Endothelial cell of umbilical vein (primary cell): ENCODE measurements at regions of chr14 and their contacts with region 1.

Region 1: DNA sequence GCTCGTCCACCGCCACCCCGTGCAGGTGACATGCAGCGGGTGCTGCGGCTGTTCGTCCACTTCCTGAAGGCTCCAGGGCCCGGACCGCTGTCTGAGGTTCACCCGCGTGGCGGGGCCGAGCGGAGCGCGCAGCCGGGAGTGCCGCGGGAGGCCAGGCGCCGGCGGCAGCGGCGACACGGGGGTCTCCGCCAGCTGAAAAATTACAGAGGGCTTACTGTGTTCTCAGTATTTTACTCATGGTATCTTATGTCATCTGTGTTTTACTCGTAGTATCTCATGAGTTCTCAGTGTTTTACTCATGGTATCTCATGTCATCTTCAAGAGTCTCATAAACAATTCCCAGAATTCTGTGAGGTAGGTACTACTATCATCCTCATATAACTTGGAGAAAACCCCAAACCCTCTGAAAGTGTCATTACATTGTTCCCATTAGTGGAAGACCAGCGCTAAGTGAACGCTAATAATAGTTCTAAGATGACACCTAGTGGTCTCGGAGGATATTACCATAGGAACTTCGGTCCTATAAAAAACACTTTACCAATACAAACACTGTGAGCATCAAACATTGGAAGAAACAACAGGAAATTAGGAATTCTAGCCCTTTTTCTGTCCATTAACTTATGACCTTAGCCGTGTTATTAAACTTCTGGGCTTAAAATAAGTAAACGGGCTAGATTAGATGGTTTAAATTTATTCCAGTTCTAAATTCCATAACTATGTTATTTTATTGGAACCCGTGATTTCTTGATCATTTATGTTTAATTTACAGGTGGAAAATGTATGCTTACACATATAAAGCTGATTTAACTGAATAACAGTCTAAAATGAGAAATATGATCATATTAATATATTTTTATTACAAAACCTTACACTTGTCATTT is 32.4 kb downstream of the AK7 start:
- DNase-seq: peak; percentile 82
- H3K4me3 ChIP-seq: peak overlapping the region; percentile 9 to 43 (median 25)
- H3K27ac ChIP-seq: no peak overlapping the region
- H3K4me1 ChIP-seq: peaks cover 7% of the 10 kb centered on the region
- H3K27me3 ChIP-seq: no peaks in the 10 kb centered on the region
- CTCF ChIP-seq: peak; percentile 41 to 48
- POLR2A ChIP-seq: no peak

Region 2: GRCh38 chr14:96100161-96101029 is 324.0 kb before region 1 on chr14:
- CTCF ChIA-PET with region 1: interaction called, 5 read pairs
- POLR2A ChIA-PET with region 1: no interaction called
- dilution Hi-C with region 1: no loop called
- intact Hi-C with region 1: loop called (anchors 1 kb)
- DNase-seq: peak; percentile 64
- H3K4me3 ChIP-seq: no peak overlapping the region
- H3K27ac ChIP-seq: no peak overlapping the region
- H3K4me1 ChIP-seq: no peaks in the 10 kb centered on the region
- H3K27me3 ChIP-seq: no peaks in the 10 kb centered on the region
- CTCF ChIP-seq: peak; percentile 81 to 83
- POLR2A ChIP-seq: no peak

Region 3: DNA sequence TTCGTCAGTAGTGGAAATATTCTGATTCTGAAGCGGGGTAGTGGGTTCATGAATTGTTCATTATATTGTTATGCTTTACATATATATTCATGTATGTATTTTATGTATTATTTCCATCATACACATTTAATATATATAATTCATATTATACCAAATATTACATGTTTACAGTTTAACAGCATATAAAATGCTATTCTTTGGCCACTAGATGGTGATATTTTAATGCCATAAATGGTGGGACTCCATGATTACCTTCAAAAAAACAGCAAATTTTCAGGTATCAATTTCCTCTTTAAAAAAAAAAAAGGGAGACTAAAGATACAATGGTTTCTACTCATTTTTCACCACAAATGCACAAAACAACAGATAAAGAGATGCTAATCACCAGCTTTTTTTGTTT is 127.3 kb before region 1 on chr14:
- CTCF ChIA-PET with region 1: interaction called, 36 read pairs
- POLR2A ChIA-PET with region 1: no interaction called
- dilution Hi-C with region 1: no loop called
- intact Hi-C with region 1: loop called (anchors 1 kb)
- DNase-seq: peak; percentile 22
- H3K4me3 ChIP-seq: no peak overlapping the region
- H3K27ac ChIP-seq: no peak overlapping the region
- H3K4me1 ChIP-seq: peaks cover 8% of the 10 kb centered on the region
- H3K27me3 ChIP-seq: no peaks in the 10 kb centered on the region
- CTCF ChIP-seq: peak; percentile 15 to 25
- POLR2A ChIP-seq: no peak

Region 4: GRCh38 chr14:96362965-96363756 is 61.2 kb before region 1 on chr14 and contains the starts of genes ATG2B and GSKIP:
- CTCF ChIA-PET with region 1: no interaction called
- POLR2A ChIA-PET with region 1: no interaction called
- dilution Hi-C with region 1: no loop called
- intact Hi-C with region 1: loop called (anchors 1 kb)
- DNase-seq: peak; percentile 90
- H3K4me3 ChIP-seq: peak within 1 kb of the TSS; percentile 80 to 97 (median 95)
- H3K27ac ChIP-seq: peak within 1 kb of the TSS; percentile 82
- H3K4me1 ChIP-seq: peaks cover 23% of the 10 kb centered on the region
- H3K27me3 ChIP-seq: no peaks in the 10 kb centered on the region
- CTCF ChIP-seq: no peak
- POLR2A ChIP-seq: peak; percentile 51
- total RNA-seq, gene ATG2B: 17.8 and 18.3 TPM in 2 replicates
- total RNA-seq, gene GSKIP: 15.9 and 20.2 TPM in 2 replicates

Region 5: DNA sequence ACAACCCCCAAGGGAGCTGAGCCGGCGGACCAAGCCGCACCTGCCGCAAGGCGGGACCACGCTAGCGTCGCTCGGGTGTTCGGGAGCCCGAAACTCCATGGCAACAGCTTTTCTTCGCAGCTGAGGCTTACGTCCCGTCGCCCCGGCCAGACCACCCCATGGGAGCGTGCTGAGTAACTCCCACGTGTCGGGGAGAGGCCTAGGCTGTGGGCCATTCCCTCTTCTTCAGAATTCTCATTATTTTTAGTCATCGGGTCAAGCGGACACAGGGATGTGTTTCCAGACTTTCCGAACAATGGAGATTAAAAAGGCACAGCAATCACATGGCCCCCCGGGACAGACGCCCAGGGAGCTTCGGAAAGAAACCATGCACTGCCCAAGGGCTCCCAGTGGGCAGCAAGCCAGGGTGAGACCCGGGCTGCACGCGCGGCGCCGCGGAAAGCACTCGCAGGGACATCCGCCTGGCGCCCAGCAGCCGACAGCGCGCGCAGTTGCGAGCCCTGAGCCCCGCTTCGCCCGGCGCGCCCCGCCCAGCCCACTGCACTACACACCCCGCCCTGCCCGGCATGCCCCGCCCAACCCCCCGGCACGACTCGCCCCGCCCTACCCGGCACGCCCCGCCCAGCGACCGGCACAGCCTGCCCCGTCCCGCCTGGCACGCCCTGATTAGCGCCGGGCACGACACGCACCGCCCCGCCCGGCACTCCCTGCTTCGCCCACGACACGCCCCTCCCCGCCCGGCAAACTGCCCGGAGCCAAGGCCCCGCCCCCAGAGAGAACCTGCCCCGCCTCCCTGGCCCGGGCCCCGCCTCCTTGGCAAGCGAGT is 32.8 kb before region 1 on chr14:
- CTCF ChIA-PET with region 1: interaction called, 3 read pairs
- POLR2A ChIA-PET with region 1: no interaction called
- dilution Hi-C with region 1: no loop called
- intact Hi-C with region 1: loop called (anchors 1 kb)
- DNase-seq: peak; percentile 96
- H3K4me3 ChIP-seq: peak overlapping the region; percentile 69 to 77 (median 70)
- H3K27ac ChIP-seq: peak overlapping the region; percentile 22
- H3K4me1 ChIP-seq: peaks cover 7% of the 10 kb centered on the region
- H3K27me3 ChIP-seq: no peaks in the 10 kb centered on the region
- CTCF ChIP-seq: no peak
- POLR2A ChIP-seq: peak; percentile 65

Region 6: GRCh38 chr14:96479435-96480146 is 55.2 kb after region 1 on chr14:
- CTCF ChIA-PET with region 1: no interaction called
- POLR2A ChIA-PET with region 1: no interaction called
- dilution Hi-C with region 1: no loop called
- intact Hi-C with region 1: no loop called
- DNase-seq: no peak
- H3K4me3 ChIP-seq: no peak overlapping the region
- H3K27ac ChIP-seq: no peak overlapping the region
- H3K4me1 ChIP-seq: no peaks in the 10 kb centered on the region
- H3K27me3 ChIP-seq: no peaks in the 10 kb centered on the region
- CTCF ChIP-seq: no peak
- POLR2A ChIP-seq: no peak

Region 7: GRCh38 chr14:96722736-96723349 is 298.5 kb after region 1 on chr14:
- CTCF ChIA-PET with region 1: no interaction called
- POLR2A ChIA-PET with region 1: no interaction called
- dilution Hi-C with region 1: no loop called
- intact Hi-C with region 1: no loop called
- DNase-seq: no peak
- H3K4me3 ChIP-seq: no peak overlapping the region
- H3K27ac ChIP-seq: no peak overlapping the region
- H3K4me1 ChIP-seq: no peaks in the 10 kb centered on the region
- H3K27me3 ChIP-seq: no peaks in the 10 kb centered on the region
- CTCF ChIP-seq: no peak
- POLR2A ChIP-seq: no peak